Sciatic nerve (tissue), 2 donors: ENCODE measurements at regions of chr9 and their contacts with region 1.

Region 1: DNA sequence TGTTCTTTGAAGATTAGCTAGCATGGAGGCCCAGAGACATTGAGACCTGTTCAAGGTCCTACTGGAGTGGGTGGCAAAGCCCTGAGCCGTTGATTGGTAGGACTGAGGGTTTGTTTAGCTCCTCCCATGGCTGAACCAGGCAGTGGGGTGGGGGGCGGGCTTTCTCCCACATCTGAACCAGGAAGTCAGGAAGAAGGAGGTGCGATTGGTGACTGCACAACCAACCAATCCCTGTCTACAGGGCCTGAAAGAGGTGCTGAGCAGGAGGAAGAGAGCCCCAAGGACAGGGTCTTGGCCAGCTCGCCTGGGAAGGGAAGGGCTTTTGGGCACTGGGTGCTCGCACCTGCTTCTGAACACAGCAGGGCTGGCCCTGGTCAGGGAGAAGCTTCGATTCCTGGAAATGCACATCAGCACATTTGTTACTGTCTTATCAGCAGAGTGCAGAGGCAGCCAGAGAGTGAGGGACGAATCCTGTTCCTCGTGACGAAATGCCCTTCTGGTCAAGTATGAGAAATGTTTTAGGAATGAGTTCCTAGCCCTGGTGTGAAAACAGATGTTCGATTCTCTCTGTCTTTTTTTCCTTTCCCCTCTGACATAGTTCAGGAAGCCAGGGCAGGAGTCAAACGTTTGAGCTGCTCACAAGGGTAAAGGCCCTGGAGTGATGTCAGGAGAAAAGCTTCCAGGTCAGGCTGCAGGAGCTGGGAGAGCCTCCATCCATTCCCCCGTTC is 294.8 kb upstream of the KLF4 start:
- DNase-seq: no peak
- ATAC-seq: peak; percentile 89

Region 2: DNA sequence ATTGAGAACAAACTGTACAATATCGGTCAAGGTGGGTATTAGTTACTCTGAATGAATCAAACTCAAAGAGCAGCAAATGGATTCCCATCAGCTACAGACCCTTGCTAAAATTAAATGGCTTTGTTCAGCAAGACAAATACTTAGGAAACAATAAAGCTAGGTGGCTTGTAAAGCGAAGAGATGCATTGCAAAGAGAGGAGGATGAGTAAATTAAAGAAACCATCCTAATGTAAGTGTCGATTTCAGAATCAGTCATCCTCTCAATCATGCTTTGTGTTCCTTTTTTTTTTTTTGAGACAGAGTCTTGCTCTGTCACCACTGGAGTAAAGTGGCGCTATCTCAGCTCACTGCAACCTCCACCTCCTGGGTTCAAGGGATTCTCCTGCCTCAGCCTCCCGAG is 1280.6 kb before region 1 on chr9:
- intact Hi-C with region 1: loop called (anchors 5 kb)
- DNase-seq: no peak
- ATAC-seq: no peak

Region 3: GRCh38 chr9:107933097-107933496 is 148.7 kb after region 1 on chr9:
- intact Hi-C with region 1: no loop called
- DNase-seq: no peak
- ATAC-seq: no peak